Activated CD4-positive, alpha-beta memory T cell treated with anti-CD3 and anti-CD28 coated beads, Interleukin-2, amount 10 ng/mL, durations not matched to agents 7 days and 5 days (primary cell): ENCODE measurements at regions of chr1 and their contacts with region 1.

Region 1: GRCh38 chr1:67214420-67215174 is 48.3 kb downstream of the IL23R start:
- DNase-seq: peak; percentile 63
- H3K4me3 Mint-ChIP-seq: no peak overlapping the region
- H3K27ac Mint-ChIP-seq: no peak overlapping the region
- H3K4me1 Mint-ChIP-seq: peaks cover 23% of the 10 kb centered on the region
- H3K27me3 Mint-ChIP-seq: no peaks in the 10 kb centered on the region

Region 2: GRCh38 chr1:66764994-66765578 is 449.5 kb before region 1 on chr1:
- CTCF ChIA-PET with region 1: interaction called, 48 read pairs
- POLR2A ChIA-PET with region 1: no interaction called
- DNase-seq: peak; percentile 54
- H3K4me3 Mint-ChIP-seq: no peak overlapping the region
- H3K27ac Mint-ChIP-seq: no peak overlapping the region
- H3K4me1 Mint-ChIP-seq: peaks cover 15% of the 10 kb centered on the region
- H3K27me3 Mint-ChIP-seq: peaks cover 9% of the 10 kb centered on the region

Region 3: GRCh38 chr1:67089685-67090208 is 124.8 kb before region 1 on chr1:
- CTCF ChIA-PET with region 1: no interaction called
- POLR2A ChIA-PET with region 1: no interaction called
- DNase-seq: no peak
- H3K4me3 Mint-ChIP-seq: no peak overlapping the region
- H3K27ac Mint-ChIP-seq: no peak overlapping the region
- H3K4me1 Mint-ChIP-seq: peaks cover 1% of the 10 kb centered on the region
- H3K27me3 Mint-ChIP-seq: peaks cover 4% of the 10 kb centered on the region

Region 4: GRCh38 chr1:67126111-67126746 is 88.4 kb before region 1 on chr1:
- CTCF ChIA-PET with region 1: interaction called, 14 read pairs
- POLR2A ChIA-PET with region 1: no interaction called
- DNase-seq: no peak
- H3K4me3 Mint-ChIP-seq: no peak overlapping the region
- H3K27ac Mint-ChIP-seq: no peak overlapping the region
- H3K4me1 Mint-ChIP-seq: peaks cover 3% of the 10 kb centered on the region
- H3K27me3 Mint-ChIP-seq: no peaks in the 10 kb centered on the region

Region 5: DNA sequence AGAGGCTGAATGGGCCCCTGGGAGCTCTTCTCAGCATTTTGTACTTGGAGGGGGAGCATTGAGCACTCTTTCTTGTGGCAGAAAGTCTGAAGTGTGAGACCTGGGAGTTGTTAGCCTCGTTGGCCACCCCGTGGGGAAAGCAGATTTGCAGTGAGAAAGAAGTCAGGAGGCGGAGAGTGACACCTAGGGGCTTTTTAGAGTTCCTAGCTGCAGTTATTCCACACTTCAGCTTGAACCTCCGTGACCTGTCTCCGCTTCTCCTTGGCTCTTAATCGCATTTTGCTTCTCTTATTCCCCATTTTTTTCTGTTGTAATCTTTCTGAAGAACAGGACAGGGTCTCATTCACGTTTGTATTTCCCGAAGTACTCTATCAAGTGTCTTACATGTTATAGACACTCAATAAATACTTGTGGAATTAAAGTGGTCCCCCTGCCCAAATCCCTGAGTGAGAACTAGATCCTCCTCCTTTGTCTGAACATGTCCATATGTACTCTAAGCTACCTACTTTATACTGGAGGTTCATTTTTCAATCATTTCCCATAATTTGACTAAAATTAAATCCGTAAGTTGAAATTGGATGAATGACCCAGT is 65.3 kb before region 1 on chr1:
- CTCF ChIA-PET with region 1: interaction called, 164 read pairs
- POLR2A ChIA-PET with region 1: interaction called, 5 read pairs
- DNase-seq: peak; percentile 65
- H3K4me3 Mint-ChIP-seq: no peak overlapping the region
- H3K27ac Mint-ChIP-seq: no peak overlapping the region
- H3K4me1 Mint-ChIP-seq: peaks cover 29% of the 10 kb centered on the region
- H3K27me3 Mint-ChIP-seq: peaks cover 22% of the 10 kb centered on the region

Region 6: DNA sequence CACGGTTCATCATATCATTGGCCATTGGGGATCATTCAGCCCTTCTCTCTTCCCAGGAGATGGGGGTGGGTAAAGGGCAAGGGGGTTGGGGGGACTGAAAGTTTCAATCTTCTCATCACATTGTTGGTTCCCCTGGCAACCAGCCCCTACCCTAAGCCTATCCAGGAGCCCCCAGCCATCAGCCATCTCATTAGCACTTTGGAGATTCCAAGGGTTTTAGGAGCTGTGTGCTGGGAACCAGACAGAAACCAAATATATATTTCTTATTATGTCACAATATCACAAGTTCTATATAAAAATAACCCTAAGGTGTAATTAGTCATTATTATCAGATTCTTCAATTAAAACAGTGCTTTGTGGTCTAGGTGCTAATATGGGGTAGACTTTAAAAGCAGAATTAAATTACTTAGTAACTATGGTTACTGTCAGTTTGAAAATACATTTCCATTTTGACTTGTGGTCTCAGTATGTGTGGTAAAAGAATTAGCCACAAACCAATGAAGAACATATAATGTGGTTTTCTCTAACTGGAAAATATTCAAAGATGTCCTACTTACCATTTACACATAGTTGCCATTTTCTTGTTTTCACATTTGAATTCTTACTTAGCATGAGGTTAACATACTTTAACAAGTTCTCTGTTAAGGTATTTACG is 20.3 kb before region 1 on chr1:
- CTCF ChIA-PET with region 1: interaction called, 43 read pairs
- POLR2A ChIA-PET with region 1: interaction called, 5 read pairs
- DNase-seq: no peak
- H3K4me3 Mint-ChIP-seq: peak overlapping the region; percentile 21
- H3K27ac Mint-ChIP-seq: peak overlapping the region; percentile 75
- H3K4me1 Mint-ChIP-seq: peaks cover 24% of the 10 kb centered on the region
- H3K27me3 Mint-ChIP-seq: no peaks in the 10 kb centered on the region

Region 7: DNA sequence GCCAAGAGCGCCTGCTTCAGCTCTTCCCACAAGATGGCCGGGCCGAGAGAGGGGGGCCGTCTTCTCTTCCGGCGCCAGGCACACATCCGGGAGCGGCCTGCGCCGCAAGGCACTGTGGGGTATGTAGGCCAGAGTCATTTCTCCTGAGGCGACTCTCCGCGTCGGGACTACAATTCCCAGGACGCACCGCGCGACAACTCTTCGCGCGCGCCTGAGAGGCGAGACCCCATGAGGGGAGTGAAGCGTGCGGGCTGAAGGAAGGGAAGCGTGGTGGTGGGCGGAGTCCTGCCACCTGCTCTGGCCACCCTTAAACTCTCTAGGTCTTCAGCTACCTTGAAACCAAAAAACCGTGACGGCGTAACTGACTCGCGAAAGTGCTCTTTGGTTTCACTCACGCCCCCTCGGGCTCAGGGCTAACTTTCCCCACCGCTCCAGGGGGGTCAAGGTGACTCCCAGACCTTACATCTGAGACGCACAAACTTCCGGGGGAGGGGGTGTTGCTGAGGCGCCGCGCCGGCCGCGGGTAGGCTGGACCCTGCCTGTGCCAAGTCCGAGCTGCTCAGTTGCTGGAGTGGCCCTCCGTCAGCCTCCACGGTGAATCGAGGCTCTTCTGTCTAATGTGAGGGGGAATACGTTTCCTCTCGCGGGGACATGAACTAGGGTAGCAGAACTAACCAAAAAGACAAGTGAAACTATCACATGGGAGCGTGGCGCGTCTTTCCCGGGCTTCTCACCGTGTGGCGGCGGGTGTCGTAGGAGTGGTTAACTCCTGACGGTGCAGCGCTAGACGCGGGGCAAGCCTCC is 216.0 kb after region 1 on chr1 and contains the start of gene SERBP1:
- CTCF ChIA-PET with region 1: interaction called, 19 read pairs
- POLR2A ChIA-PET with region 1: no interaction called
- DNase-seq: peak; percentile 97
- H3K4me3 Mint-ChIP-seq: peak within 1 kb of the TSS; percentile 81
- H3K27ac Mint-ChIP-seq: peak within 1 kb of the TSS; percentile 87
- H3K4me1 Mint-ChIP-seq: peaks cover 40% of the 10 kb centered on the region
- H3K27me3 Mint-ChIP-seq: no peaks in the 10 kb centered on the region
- total RNA-seq, gene SERBP1: 213 to 219 TPM